Heart right ventricle (tissue), 16 donors: ENCODE measurements at regions of chr2 and their contacts with region 1.

Region 1: DNA sequence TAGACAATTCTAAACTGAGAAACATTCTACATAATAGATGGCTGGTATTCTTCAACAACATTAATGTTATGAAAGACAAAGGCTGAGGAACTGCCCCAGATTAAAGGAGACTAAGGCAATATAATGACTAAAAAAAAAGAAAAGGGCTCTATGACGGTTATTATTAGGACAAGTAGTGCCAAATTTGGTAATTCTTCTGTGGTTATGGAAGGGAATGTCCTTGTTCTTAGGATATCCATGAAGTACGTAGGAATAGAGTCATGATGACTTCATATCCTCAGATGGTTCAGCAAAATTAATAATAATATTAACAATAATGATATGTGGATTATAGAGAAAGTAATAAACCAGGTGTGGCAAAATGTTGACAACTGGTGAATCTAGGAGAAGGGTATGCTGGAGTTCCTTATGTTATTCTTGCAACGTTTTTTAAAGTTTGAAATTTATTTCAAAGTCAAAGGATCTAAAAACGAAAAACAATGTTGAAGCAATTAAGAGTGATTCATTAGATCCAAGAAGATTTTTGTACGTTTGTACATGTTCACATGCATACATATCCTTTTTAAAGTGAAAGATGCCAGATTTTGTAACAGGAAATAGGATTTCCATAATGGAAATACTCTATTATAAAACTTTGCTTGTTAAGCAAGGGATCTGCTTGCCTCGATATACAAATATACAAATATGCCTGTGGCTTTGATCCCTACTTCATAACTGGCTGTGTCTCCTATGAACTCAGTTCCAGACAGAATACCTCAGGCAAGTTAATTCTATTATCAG is 27.7 kb upstream of the STRN start:
- DNase-seq: no peak
- ATAC-seq: no peak
- H3K4me3 ChIP-seq: no peak overlapping the region
- H3K27ac ChIP-seq: no peak overlapping the region
- H3K4me1 ChIP-seq: no peaks in the 10 kb centered on the region
- H3K27me3 ChIP-seq: no peaks in the 10 kb centered on the region
- CTCF ChIP-seq: no peak

Region 2: GRCh38 chr2:36695746-36696415 is 298.1 kb before region 1 on chr2:
- intact Hi-C with region 1: no loop called
- DNase-seq: no peak
- ATAC-seq: peak in 6 of 8 donors; percentile 45 to 71 (median 52)
- H3K4me3 ChIP-seq: peak overlapping the region in 4 of 10 donors; percentile 23 to 38 (median 35)
- H3K27ac ChIP-seq: peak overlapping the region in 1 of 10 donors; percentile 19
- H3K4me1 ChIP-seq: no peaks in the 10 kb centered on the region
- H3K27me3 ChIP-seq: peaks cover 0 to 7% (median 0%) of the 10 kb centered on the region in 7 donors
- CTCF ChIP-seq: peak in 3 of 9 donors; percentile 17 to 38 (median 23)

Region 3: GRCh38 chr2:36770542-36771287 is 223.3 kb before region 1 on chr2:
- intact Hi-C with region 1: loop called in 1 of 10 experiments (anchors 10 kb)
- DNase-seq: peak in 1 of 2 donors; percentile 20
- ATAC-seq: peak in 3 of 8 donors; percentile 37 to 46 (median 37)
- H3K4me3 ChIP-seq: no peak overlapping the region
- H3K27ac ChIP-seq: no peak overlapping the region
- H3K4me1 ChIP-seq: no peaks in the 10 kb centered on the region
- H3K27me3 ChIP-seq: no peaks in the 10 kb centered on the region
- CTCF ChIP-seq: peak in 7 of 9 donors; percentile 32 to 66 (median 41)

Region 4: GRCh38 chr2:36871068-36871707 is 122.8 kb before region 1 on chr2:
- intact Hi-C with region 1: no loop called
- DNase-seq: no peak
- ATAC-seq: no peak
- H3K4me3 ChIP-seq: no peak overlapping the region
- H3K27ac ChIP-seq: no peak overlapping the region
- H3K4me1 ChIP-seq: no peaks in the 10 kb centered on the region
- H3K27me3 ChIP-seq: no peaks in the 10 kb centered on the region
- CTCF ChIP-seq: no peak